Left colon (tissue), 2 donors: ENCODE measurements at regions of chr6 and their contacts with region 1.

Region 1: DNA sequence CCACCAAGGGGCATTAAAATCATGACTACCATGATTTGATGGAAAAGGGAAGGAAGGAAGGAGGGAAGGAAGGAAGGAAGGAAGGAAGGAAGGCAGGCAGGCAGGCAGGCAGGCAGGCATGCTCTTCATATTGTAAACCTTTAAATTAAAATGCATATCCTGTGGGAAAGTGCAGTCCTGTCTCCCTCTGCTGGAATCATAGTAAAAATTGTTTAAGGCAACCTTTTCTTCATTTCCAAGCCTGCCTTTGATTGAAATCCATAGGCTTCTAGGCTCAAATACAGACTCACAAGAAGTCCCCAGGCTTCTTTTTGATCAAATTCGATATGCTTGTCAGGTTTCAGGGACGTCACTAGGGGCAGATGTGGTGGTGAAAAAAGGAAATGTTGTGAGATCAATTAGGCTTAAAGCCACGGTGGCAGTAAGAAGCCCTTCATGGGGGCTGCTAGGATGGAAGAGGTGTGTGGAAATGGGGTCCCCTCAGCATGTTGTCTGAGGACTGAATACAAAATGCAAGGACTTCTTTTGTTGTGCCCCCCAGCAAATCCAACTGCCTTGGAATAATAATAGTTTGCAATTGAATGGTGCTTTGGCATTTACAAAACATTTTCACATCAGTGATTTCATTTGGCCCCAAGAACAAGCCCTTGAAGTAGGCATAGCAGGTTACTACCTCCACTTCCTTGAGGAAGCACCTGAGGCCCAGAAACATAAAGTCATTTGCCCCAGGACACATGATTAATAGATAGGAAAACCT is 25.6 kb upstream of the GABRR1 start:
- DNase-seq: no peak
- ATAC-seq: peak; percentile 85

Region 2: GRCh38 chr6:88211446-88211845 is 1031.3 kb before region 1 on chr6:
- intact Hi-C with region 1: no loop called
- DNase-seq: no peak
- ATAC-seq: no peak

Region 3: GRCh38 chr6:88813045-88813444 is 429.7 kb before region 1 on chr6:
- intact Hi-C with region 1: no loop called
- DNase-seq: no peak
- ATAC-seq: no peak

Region 4: DNA sequence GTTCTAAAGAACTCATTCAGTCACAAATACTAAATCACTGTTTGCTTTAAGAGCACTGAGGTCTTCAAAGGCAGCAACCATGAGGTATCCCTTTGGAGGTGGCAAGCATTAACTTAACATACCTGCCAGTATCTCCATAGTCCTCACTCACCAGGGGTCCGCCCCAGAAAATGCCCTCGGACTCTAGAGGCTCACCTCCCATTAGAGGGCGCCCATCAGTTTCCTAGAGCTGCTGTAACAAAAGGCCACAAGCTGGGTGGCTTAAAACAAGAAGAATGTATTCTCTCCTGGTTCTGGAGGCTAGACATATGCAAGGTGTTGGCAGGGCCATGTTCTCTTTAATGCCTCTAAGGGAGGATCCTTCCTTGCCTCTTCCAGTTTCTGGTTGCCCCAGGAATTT is 267.4 kb before region 1 on chr6:
- intact Hi-C with region 1: loop called (anchors 5 kb)
- DNase-seq: no peak
- ATAC-seq: no peak

Region 5: DNA sequence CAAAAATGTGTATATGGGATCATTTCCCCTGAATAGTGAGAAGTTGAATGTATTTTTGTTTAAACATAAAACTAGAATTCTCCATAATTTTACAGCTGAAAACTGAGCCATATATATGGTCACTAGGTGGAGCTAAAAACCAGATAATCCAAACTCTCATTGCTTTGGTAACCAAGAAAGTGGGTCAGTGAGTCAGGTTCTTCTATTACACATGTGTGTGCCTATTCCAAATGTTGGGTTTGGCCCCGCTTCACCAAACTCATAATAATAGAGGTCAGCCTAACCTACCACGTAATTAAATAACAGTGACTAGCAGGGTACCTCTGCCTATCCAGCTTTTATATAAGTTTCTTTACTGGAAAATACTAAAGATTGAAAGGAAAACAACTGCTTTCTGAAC is 260.0 kb before region 1 on chr6:
- intact Hi-C with region 1: loop called (anchors 5 kb)
- DNase-seq: no peak
- ATAC-seq: peak; percentile 92

Region 6: DNA sequence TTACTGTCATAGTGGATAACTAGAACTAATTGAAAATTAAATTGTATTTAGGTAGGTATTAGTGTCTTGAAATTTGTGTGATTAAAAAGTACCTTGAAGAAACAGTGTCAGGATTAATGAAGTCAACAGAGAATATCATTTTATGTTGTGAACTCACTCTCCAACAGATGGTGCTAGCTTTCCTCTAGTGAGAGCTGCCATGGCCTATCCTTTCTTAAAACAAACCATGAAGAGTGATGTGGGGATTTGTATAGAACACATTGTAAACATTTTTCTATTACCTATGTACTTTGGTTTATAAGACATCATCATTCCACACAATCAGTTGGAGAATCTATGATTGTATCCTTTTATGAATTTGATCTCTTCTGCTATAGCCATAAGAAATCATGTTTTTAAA is 120.1 kb before region 1 on chr6:
- intact Hi-C with region 1: loop called in 1 of 2 experiments (anchors 5 kb)
- DNase-seq: no peak
- ATAC-seq: peak; percentile 91

Region 7: DNA sequence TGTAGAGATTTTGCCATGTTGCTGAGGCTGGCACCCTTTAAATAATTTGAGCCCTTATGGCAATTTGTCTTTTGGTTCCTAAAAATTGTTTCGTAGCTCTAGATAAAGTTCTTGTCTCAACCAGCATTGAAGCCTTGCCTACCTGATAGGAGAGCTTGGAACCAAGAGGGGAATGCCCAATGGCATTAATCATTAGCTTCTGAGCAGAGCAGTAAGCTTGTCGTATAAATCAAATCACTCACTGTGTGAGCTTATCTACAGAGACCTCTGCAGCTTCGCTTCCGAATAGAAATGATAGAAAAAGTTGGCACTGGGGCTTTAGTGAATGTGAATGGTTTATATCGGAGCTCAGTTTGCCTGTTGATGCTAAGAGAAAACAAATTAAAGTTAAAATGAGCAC is 200.9 kb after region 1 on chr6:
- intact Hi-C with region 1: no loop called
- DNase-seq: no peak
- ATAC-seq: no peak